Activated B cell treated with CpG ODN at 0.5 μM for 24 hours (primary cell): ENCODE measurements at regions of chr3 and their contacts with region 1.

Region 1: DNA sequence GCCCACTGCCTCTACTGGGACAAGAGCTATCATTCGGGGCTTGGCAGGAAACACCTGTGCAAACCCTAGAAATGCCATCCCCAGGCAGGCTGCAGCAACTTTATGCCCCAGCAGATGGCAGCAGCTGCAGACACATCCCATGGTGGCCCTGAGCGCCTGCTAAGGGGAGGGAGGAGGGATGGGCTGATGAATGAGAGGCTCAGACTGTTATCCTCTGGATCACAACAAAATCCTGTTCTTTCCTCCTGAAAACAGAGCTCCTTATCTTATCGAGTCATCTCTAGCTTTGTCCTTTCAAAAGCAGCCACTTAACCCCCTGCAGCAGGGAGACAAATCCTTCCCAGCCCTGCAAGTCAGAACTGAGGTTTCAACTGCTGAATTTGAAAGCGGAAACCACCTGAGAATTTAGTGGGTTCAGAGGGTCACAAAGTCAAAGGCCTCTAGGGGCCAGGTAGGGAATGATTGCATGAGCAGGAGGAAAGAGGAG is 90.6 kb upstream of the PROK2 start:
- DNase-seq: peak; percentile 70
- ATAC-seq: peak; percentile 99
- H3K4me3 Mint-ChIP-seq: no peak overlapping the region
- H3K27ac Mint-ChIP-seq: no peak overlapping the region
- H3K4me1 Mint-ChIP-seq: peaks cover 13% of the 10 kb centered on the region
- H3K27me3 Mint-ChIP-seq: peaks cover 31% of the 10 kb centered on the region
- CTCF ChIP-seq: no peak

Region 2: DNA sequence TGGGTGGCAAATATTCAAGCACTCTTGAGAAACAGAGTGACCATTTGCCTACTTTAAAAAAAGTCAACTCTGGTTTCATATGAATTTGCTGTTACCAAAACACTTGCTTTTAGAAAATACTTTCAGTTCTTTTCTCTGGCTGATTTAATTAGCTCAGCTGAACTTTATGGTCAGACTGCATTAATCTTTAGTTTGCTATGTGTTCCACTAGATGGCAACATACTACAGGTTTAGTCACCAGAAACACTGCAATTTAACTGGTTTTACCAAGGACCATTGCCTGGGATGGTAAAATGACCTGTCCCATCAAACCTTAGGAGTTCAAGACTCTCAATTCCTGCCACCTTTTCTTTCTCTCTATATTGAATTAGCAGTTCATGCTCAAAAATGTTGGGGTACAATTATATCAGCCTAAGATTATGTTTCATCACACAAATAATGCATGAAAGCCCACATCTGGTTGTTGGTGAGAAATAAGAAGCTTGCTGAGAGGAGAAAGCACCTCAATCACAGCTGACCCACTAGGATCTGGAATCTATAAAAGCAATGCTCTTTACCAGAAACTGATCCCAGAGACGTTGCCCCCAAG is 164.5 kb before region 1 on chr3:
- CTCF ChIA-PET with region 1: interaction called, 6 read pairs
- POLR2A ChIA-PET with region 1: no interaction called
- intact Hi-C with region 1: loop called (anchors 2 kb)
- DNase-seq: no peak
- ATAC-seq: peak; percentile 52
- H3K4me3 Mint-ChIP-seq: no peak overlapping the region
- H3K27ac Mint-ChIP-seq: no peak overlapping the region
- H3K4me1 Mint-ChIP-seq: no peaks in the 10 kb centered on the region
- H3K27me3 Mint-ChIP-seq: no peaks in the 10 kb centered on the region
- CTCF ChIP-seq: no peak

Region 3: GRCh38 chr3:71955240-71956068 is 80.0 kb after region 1 on chr3:
- CTCF ChIA-PET with region 1: interaction called, 5 read pairs
- POLR2A ChIA-PET with region 1: no interaction called
- intact Hi-C with region 1: loop called (anchors 5 kb)
- DNase-seq: no peak
- ATAC-seq: no peak
- H3K4me3 Mint-ChIP-seq: no peak overlapping the region
- H3K27ac Mint-ChIP-seq: no peak overlapping the region
- H3K4me1 Mint-ChIP-seq: peaks cover 12% of the 10 kb centered on the region
- H3K27me3 Mint-ChIP-seq: peaks cover 8% of the 10 kb centered on the region
- CTCF ChIP-seq: no peak

Region 4: GRCh38 chr3:72134989-72135451 is 259.5 kb after region 1 on chr3:
- CTCF ChIA-PET with region 1: no interaction called
- POLR2A ChIA-PET with region 1: no interaction called
- intact Hi-C with region 1: loop called (anchors 5 kb)
- DNase-seq: no peak
- ATAC-seq: peak; percentile 85
- H3K4me3 Mint-ChIP-seq: peak overlapping the region; percentile 3
- H3K27ac Mint-ChIP-seq: peak overlapping the region; percentile 18
- H3K4me1 Mint-ChIP-seq: peaks cover 37% of the 10 kb centered on the region
- H3K27me3 Mint-ChIP-seq: no peaks in the 10 kb centered on the region
- CTCF ChIP-seq: no peak

Region 5: DNA sequence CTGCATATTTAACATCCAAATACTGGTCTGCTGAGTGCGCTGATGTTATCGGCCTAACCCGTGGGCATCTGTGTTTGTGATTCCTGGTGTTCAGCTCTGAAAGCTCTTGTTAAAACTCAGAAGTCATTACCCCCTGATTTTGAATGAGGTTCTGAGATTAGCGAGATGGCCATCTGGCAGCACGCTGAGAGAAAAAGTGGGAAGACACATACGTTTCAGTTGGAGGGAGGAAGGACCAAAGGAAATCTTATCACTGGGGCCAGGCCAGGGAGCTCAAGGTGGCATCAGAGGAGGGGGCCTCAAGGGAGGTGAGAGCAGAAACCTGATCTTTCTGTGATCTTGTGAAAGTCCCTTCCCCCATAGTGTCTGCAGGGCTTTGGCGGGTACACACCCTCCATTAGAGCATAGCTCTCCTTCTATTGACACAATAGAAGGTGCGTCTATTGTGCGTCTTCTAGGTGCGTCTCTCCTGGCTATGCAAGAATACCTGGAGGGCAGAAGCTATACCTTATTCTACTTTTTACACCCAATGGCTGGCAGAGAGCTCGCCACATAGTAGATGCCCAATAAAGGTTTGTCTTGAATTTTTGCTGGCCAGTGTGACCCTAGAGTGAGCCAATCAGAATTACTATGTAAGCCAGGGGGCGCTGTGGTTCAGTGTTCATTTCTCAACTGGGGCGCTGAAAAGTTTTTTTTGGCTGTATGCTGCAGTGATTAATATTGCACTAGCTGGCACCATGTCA is 790.4 kb after region 1 on chr3:
- CTCF ChIA-PET with region 1: interaction called, 6 read pairs
- POLR2A ChIA-PET with region 1: no interaction called
- intact Hi-C with region 1: loop called (anchors 1 kb)
- DNase-seq: no peak
- ATAC-seq: peak; percentile 50
- H3K4me3 Mint-ChIP-seq: no peak overlapping the region
- H3K27ac Mint-ChIP-seq: no peak overlapping the region
- H3K4me1 Mint-ChIP-seq: no peaks in the 10 kb centered on the region
- H3K27me3 Mint-ChIP-seq: peaks cover 6% of the 10 kb centered on the region
- CTCF ChIP-seq: no peak

Region 6: GRCh38 chr3:72938471-72939265 is 1063.2 kb after region 1 on chr3:
- CTCF ChIA-PET with region 1: no interaction called
- POLR2A ChIA-PET with region 1: no interaction called
- intact Hi-C with region 1: loop called (anchors 1 kb)
- DNase-seq: no peak
- ATAC-seq: peak; percentile 81
- H3K4me3 Mint-ChIP-seq: no peak overlapping the region
- H3K27ac Mint-ChIP-seq: no peak overlapping the region
- H3K4me1 Mint-ChIP-seq: no peaks in the 10 kb centered on the region
- H3K27me3 Mint-ChIP-seq: peaks cover 4% of the 10 kb centered on the region
- CTCF ChIP-seq: no peak

Region 7: DNA sequence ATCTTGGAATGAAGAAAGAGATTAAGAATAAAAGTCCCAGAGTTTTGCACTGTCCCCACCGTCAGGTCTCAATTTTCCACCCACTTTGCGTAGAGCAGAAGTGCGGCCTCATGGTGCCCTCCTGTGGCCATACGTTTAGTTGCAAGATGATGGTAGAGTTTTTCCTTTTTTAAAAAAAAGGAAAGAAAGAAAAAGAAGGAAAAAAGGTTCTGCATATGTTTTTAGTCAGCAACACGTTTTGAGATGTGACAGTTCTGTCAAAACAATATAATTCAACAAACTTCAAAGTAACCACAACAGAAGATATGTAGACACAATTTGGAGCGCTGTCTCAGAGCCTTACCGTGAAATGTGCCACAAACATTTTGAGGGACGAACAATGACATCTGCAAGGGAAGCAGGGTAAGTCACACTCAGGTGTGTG is 1210.6 kb after region 1 on chr3:
- CTCF ChIA-PET with region 1: no interaction called
- POLR2A ChIA-PET with region 1: no interaction called
- intact Hi-C with region 1: loop called (anchors 1 kb)
- DNase-seq: no peak
- ATAC-seq: peak; percentile 49
- H3K4me3 Mint-ChIP-seq: no peak overlapping the region
- H3K27ac Mint-ChIP-seq: no peak overlapping the region
- H3K4me1 Mint-ChIP-seq: no peaks in the 10 kb centered on the region
- H3K27me3 Mint-ChIP-seq: no peaks in the 10 kb centered on the region
- CTCF ChIP-seq: peak; percentile 85